ENCODE measurements at regions of chr19 and their contacts with region 1.

Region 1: GRCh38 chr19:12736995-12737834 is at the start of gene GET3:
- DNase-seq: peak; percentile 63 to 92 (median 78)
- ATAC-seq: peak; percentile 83 to 87
- H3K4me3 Mint-ChIP-seq: peak within 1 kb of the TSS; percentile 96 to 100 (median 99)
- H3K27ac Mint-ChIP-seq: peak within 1 kb of the TSS; percentile 93 to 100 (median 98)
- H3K4me1 Mint-ChIP-seq: peaks cover 21 to 46% (median 43%) of the 10 kb centered on the region in 4 donors
- H3K27me3 Mint-ChIP-seq: no peaks in the 10 kb centered on the region
- polyA plus RNA-seq, gene GET3: 46.8 to 72.3 (median 55.7) TPM

Region 2: GRCh38 chr19:12666265-12667048 is 70.8 kb before region 1 on chr19 and contains the starts of genes MAN2B1 and WDR83:
- POLR2A ChIA-PET with region 1: no interaction called
- DNase-seq: peak; percentile 39 to 85 (median 76)
- ATAC-seq: peak; percentile 75 to 79
- H3K4me3 Mint-ChIP-seq: peak within 1 kb of the TSS; percentile 93 to 99 (median 96)
- H3K27ac Mint-ChIP-seq: peak within 1 kb of the TSS; percentile 85 to 100 (median 96)
- H3K4me1 Mint-ChIP-seq: peaks cover 18 to 66% (median 58%) of the 10 kb centered on the region in 4 donors
- H3K27me3 Mint-ChIP-seq: no peaks in the 10 kb centered on the region
- polyA plus RNA-seq, gene MAN2B1: 33.9 to 55.4 (median 34.7) TPM
- polyA plus RNA-seq, gene WDR83: 12.6 to 19.9 (median 12.9) TPM

Region 3: GRCh38 chr19:12722566-12723380 is 14.4 kb before region 1 on chr19:
- POLR2A ChIA-PET with region 1: interaction called, 158 read pairs
- DNase-seq: peak; percentile 83 to 98 (median 92)
- ATAC-seq: peak; percentile 88 to 92
- H3K4me3 Mint-ChIP-seq: peak overlapping the region; percentile 85 to 96 (median 92)
- H3K27ac Mint-ChIP-seq: peak overlapping the region; percentile 88 to 97 (median 93)
- H3K4me1 Mint-ChIP-seq: peaks cover 28 to 47% (median 40%) of the 10 kb centered on the region in 4 donors
- H3K27me3 Mint-ChIP-seq: no peaks in the 10 kb centered on the region